Mammary epithelial cell (primary cell): ENCODE measurements at regions of chr3 and their contacts with region 1.

Region 1: DNA sequence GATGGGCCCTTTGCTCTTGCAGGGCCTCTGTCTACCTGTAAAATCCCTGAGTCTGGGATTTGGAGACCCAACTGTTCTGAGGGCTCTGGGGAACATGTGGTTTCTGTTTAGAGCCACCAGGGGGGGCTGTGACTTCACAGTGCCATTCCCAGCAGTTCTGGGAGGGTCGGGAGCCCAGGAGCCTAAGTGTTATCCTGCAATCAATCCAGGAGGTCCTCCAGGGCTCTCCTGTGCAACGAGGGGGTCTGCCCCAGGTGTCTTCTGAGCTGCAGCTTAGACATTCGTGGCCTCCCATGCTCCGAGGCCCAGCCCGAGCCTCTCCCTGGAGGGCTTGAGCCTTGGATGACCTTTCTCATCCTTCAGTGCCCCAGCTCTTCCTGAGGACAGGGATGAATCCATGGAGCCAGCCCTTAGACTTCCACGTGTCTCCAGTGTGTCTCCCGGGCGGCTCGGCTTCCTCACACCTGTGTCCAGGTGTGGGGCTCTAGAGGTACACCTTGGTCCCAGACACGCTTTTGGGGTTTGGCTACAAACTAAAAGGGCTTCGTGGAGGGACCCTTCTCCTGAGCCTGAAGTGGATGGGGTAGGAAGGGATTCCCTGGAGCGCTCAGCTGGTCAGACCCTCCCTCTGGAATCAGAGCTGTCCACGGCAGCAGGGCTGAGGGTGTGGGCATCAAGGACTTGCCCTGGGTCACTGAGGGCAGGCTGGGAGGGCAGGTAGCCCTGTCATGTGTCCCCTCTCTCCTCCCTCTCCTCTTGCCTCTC is 20.3 kb upstream of the ABTB1 start:
- DNase-seq: no peak
- H3K4me3 ChIP-seq: no peak overlapping the region
- H3K27ac ChIP-seq: no peak overlapping the region
- H3K4me1 ChIP-seq: no peaks in the 10 kb centered on the region
- H3K27me3 ChIP-seq: no peaks in the 10 kb centered on the region
- CTCF ChIP-seq: peak; percentile 69 to 91

Region 2: DNA sequence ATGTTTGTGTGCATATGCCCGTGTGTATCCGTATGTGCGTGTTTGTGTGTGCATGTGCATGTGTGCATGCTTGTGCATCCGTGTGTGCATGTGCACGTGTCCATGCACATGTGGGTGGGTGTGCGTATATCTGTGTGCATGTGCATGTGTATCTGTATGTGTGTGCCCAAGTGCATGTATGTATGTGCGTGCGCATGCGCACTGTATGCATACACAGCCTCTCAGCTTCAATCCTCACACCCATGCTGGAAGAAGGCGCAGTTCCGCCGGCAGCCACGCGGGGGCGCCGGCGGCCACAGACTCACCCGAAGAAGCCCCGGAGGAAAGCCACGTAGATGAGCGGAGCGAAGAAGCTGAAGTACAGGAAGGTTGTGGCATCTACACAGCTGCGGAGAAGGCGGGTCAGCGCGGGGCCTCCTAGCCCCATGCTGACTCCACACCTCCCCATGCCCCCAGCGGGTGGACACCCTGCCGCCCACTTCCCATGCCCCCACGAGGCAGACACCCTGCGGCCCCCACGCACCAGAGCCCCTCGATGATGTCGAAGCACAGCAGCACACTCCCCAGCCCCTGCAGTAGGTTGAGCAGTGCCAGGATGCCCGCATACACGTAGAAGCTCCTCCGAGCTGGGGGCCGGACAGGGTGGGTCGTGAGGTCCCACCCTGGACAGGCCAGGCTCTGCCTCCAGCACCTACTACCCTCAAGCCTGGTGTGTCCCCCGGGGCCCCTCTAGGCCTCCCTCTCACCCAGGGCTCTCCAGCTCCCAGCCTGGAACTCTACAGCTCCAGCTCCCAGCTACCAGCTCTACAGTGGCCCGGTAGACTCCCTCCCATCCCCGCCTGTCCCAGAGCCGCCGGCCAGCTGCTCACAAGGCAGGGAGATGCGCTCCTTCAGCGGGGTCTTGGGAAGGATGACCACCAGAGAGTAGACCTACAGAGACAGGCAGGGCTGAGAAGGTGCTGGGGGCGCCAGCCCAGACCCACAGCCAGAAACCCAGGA is 77.2 kb before region 1 on chr3:
- CTCF ChIA-PET with region 1: no interaction called
- dilution Hi-C with region 1: no loop called
- in situ Hi-C with region 1: no loop called
- intact Hi-C with region 1: loop called (anchors 5 kb)
- DNase-seq: peak; percentile 82
- H3K4me3 ChIP-seq: no peak overlapping the region
- H3K27ac ChIP-seq: no peak overlapping the region
- H3K4me1 ChIP-seq: peaks cover 3% of the 10 kb centered on the region
- H3K27me3 ChIP-seq: no peaks in the 10 kb centered on the region
- CTCF ChIP-seq: peak; percentile 98 to 99

Region 3: GRCh38 chr3:127697551-127698240 is 45.3 kb after region 1 on chr3:
- CTCF ChIA-PET with region 1: no interaction called
- dilution Hi-C with region 1: no loop called
- in situ Hi-C with region 1: no loop called
- intact Hi-C with region 1: loop called (anchors 1 kb)
- DNase-seq: peak; percentile 33
- H3K4me3 ChIP-seq: no peak overlapping the region
- H3K27ac ChIP-seq: no peak overlapping the region
- H3K4me1 ChIP-seq: peaks cover 7% of the 10 kb centered on the region
- H3K27me3 ChIP-seq: no peaks in the 10 kb centered on the region
- CTCF ChIP-seq: no peak

Region 4: DNA sequence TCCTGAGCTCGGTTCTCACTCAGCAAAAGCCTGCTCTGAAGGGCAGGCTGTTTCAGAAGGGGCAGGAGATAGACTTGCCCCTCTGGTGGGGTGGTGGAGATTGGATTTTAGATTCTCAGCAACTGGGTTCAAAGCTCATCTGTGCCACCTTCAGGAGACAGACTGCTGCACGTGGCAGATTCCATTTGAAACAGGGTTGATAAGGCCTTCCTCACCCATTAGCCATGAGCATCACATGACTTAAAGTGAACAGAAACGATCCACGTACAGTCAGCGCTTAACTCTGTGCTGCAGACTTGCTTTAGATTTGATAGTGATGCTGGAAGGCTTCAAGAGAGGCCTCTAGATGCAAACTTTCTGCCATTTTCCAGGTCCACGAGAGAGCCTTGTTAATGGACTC is 204.9 kb after region 1 on chr3:
- CTCF ChIA-PET with region 1: no interaction called
- dilution Hi-C with region 1: no loop called
- in situ Hi-C with region 1: no loop called
- intact Hi-C with region 1: loop called (anchors 1 kb)
- DNase-seq: no peak
- H3K4me3 ChIP-seq: no peak overlapping the region
- H3K27ac ChIP-seq: no peak overlapping the region
- H3K4me1 ChIP-seq: no peaks in the 10 kb centered on the region
- H3K27me3 ChIP-seq: no peaks in the 10 kb centered on the region
- CTCF ChIP-seq: peak in 1 of 2 donors; percentile 37

Region 5: DNA sequence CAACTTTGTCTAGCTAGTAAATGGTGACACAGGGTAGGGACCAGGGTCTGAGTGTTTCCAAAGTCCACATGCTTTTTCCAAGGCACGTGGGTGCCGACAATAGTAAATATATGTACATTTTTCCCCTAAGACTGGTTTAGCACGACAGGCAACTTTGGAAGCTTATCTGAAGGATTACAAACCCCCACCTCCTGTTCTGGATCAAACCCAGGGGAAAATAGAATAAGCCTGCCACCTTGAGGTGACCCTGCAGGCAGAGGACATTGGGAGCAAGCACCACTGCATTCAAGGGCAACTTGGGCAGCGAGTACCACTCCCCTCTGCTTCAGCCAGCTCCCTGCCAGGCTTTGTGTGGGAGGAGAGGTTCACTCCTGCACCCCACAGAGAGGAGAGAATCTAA is 307.4 kb after region 1 on chr3:
- CTCF ChIA-PET with region 1: no interaction called
- dilution Hi-C with region 1: no loop called
- in situ Hi-C with region 1: no loop called
- intact Hi-C with region 1: loop called (anchors 2 kb)
- DNase-seq: no peak
- H3K4me3 ChIP-seq: no peak overlapping the region
- H3K27ac ChIP-seq: no peak overlapping the region
- H3K4me1 ChIP-seq: peaks cover 20% of the 10 kb centered on the region
- H3K27me3 ChIP-seq: no peaks in the 10 kb centered on the region
- CTCF ChIP-seq: peak; percentile 10 to 44

Region 6: DNA sequence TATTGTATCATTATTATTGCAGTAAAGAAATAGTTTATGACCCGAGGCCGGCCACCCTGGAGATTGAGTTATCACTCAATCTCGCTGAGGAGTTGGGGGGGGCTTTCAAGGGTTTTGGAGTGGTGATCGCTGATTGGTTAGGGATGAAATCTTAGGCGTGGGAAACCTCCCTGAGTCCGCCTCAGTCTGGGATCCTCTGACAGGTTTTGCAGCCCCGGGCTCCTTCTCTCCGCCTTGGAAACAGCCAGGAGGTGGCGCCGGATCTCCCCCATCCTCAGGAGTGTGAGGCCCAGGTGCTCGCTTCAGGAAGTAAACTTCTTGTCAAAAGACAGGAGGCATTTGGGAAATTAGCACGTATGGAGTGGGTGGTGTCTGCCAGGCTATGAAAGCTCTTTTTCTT is 358.7 kb after region 1 on chr3:
- CTCF ChIA-PET with region 1: no interaction called
- dilution Hi-C with region 1: no loop called
- in situ Hi-C with region 1: no loop called
- intact Hi-C with region 1: loop called (anchors 1 kb)
- DNase-seq: peak; percentile 46
- H3K4me3 ChIP-seq: no peak overlapping the region
- H3K27ac ChIP-seq: no peak overlapping the region
- H3K4me1 ChIP-seq: peaks cover 13% of the 10 kb centered on the region
- H3K27me3 ChIP-seq: no peaks in the 10 kb centered on the region
- CTCF ChIP-seq: peak; percentile 29 to 68

Region 7: DNA sequence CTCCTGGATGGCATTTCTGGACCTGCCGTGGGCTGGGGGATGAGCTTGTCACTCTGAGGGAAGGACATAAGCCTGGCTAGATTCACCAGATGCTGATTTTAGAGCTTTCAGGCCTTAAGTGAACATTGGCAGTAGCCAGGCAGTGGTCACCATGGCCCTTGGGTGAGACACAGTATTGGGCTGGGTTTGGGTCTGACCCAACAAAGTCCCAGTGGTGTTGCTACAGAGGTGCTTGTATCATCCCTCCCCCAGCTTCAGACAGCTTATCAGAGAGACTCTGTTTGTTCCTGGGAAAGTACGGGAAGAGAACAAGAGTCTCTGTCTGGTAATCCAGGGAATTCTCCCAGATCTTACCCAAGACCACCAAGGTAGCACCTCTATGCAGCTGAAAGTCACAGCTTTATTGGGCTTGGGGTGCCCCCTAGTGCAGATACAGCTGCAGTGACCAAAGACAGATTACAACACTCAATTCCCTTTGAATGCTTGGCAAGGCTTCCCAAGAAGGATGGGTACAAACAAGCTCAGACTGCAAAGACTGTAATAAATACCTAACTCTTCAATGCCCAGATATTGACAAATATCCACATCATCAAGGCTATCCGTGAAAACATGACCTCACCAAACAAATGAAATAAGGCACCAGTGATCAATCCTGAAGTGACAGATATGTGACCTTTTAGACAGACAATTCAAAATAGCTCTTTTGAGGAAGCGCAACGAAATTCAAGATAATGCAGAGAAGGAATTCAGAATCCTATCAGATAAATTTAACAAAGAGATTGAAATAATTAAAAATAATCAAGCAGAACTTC is 481.1 kb after region 1 on chr3:
- CTCF ChIA-PET with region 1: no interaction called
- dilution Hi-C with region 1: no loop called
- in situ Hi-C with region 1: no loop called
- intact Hi-C with region 1: loop called (anchors 2 kb)
- DNase-seq: peak; percentile 39
- H3K4me3 ChIP-seq: no peak overlapping the region
- H3K27ac ChIP-seq: no peak overlapping the region
- H3K4me1 ChIP-seq: no peaks in the 10 kb centered on the region
- H3K27me3 ChIP-seq: no peaks in the 10 kb centered on the region
- CTCF ChIP-seq: peak; percentile 41 to 66